ENCODE measurements at regions of chr3 and their contacts with region 1.

Region 1: GRCh38 chr3:167882067-167882667 is 146.6 kb downstream of the SERPINI1 start:
- DNase-seq: no peak
- H3K4me3 Mint-ChIP-seq: no peak overlapping the region
- H3K27ac Mint-ChIP-seq: no peak overlapping the region
- H3K4me1 Mint-ChIP-seq: peaks cover 4% of the 10 kb centered on the region
- H3K27me3 Mint-ChIP-seq: peaks cover 24% of the 10 kb centered on the region

Region 2: DNA sequence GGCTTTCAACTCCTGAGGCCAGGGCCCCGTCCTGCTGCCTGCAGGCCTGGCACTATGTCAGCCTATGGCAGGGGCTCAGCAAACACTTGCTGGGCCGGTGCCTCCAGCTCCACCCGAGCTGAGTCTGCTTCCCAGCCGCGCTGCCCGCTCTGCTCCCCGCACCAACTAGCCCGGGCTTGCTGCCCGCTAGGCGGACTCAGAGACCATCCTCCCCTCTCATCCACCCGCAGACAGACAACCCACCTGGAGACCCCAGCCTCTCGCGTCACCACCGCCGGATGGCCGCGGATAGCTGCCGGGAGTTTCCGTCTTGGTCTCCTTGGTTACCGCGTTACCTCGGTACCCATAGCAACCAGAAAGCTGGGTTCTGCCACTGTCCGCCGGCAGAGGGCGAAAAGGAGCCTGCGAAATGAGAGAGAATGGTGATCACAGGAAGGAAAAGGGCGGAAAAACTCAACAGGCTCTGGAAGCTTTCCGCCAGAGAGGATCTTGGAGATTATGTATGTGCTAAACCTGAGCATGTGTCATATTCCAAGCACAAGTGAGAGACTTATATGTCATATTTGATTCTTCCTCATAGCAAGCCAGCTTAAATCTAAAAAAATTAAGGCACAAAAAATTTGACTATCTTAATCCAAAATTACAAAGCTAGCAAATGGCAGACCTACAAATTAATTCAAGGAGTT is 502.0 kb before region 1 on chr3 and contains the start of gene ZBBX:
- CTCF ChIA-PET with region 1: interaction called, 14 read pairs
- intact Hi-C with region 1: loop called (anchors 1 kb)
- DNase-seq: peak; percentile 92
- H3K4me3 Mint-ChIP-seq: peak within 1 kb of the TSS; percentile 77
- H3K27ac Mint-ChIP-seq: no peak within 1 kb of the TSS
- H3K4me1 Mint-ChIP-seq: peaks cover 4% of the 10 kb centered on the region
- H3K27me3 Mint-ChIP-seq: peaks cover 12% of the 10 kb centered on the region
- total RNA-seq, gene ZBBX: not detected

Region 3: GRCh38 chr3:167602041-167602440 is 280.1 kb before region 1 on chr3:
- CTCF ChIA-PET with region 1: interaction called, 4 read pairs
- intact Hi-C with region 1: loop called (anchors 2 kb)
- DNase-seq: no peak
- H3K4me3 Mint-ChIP-seq: no peak overlapping the region
- H3K27ac Mint-ChIP-seq: no peak overlapping the region
- H3K4me1 Mint-ChIP-seq: no peaks in the 10 kb centered on the region
- H3K27me3 Mint-ChIP-seq: peaks cover 4% of the 10 kb centered on the region

Region 4: GRCh38 chr3:167734498-167735232 is 147.5 kb before region 1 on chr3 and contains the start of gene PDCD10:
- CTCF ChIA-PET with region 1: no interaction called
- intact Hi-C with region 1: loop called (anchors 2 kb)
- DNase-seq: peak; percentile 98
- H3K4me3 Mint-ChIP-seq: no peak within 1 kb of the TSS
- H3K27ac Mint-ChIP-seq: no peak within 1 kb of the TSS
- H3K4me1 Mint-ChIP-seq: peaks cover 37% of the 10 kb centered on the region
- H3K27me3 Mint-ChIP-seq: no peaks in the 10 kb centered on the region
- total RNA-seq, gene PDCD10: 46.6 to 55.7 TPM